ENCODE measurements at regions of chr17 and their contacts with region 1.

Region 1: GRCh38 chr17:44070455-44071197 is at the start of gene G6PC3:
- DNase-seq: peak; percentile 93
- ATAC-seq: peak; percentile 68
- H3K4me3 Mint-ChIP-seq: peak within 1 kb of the TSS; percentile 93
- H3K27ac Mint-ChIP-seq: peak within 1 kb of the TSS; percentile 98
- H3K4me1 Mint-ChIP-seq: peaks cover 30% of the 10 kb centered on the region
- H3K27me3 Mint-ChIP-seq: no peaks in the 10 kb centered on the region
- total RNA-seq, gene G6PC3: 21.3 to 22.0 TPM

Region 2: GRCh38 chr17:43615330-43616028 is 455.1 kb before region 1 on chr17:
- CTCF ChIA-PET with region 1: no interaction called
- POLR2A ChIA-PET with region 1: no interaction called
- intact Hi-C with region 1: no loop called
- DNase-seq: no peak
- ATAC-seq: no peak
- H3K4me3 Mint-ChIP-seq: no peak overlapping the region
- H3K27ac Mint-ChIP-seq: no peak overlapping the region
- H3K4me1 Mint-ChIP-seq: no peaks in the 10 kb centered on the region
- H3K27me3 Mint-ChIP-seq: no peaks in the 10 kb centered on the region

Region 3: GRCh38 chr17:44006598-44007345 is 63.9 kb before region 1 on chr17:
- CTCF ChIA-PET with region 1: no interaction called
- POLR2A ChIA-PET with region 1: no interaction called
- intact Hi-C with region 1: loop called in 1 of 2 experiments (anchors 1 kb)
- DNase-seq: peak; percentile 99
- ATAC-seq: peak; percentile 84
- H3K4me3 Mint-ChIP-seq: peak overlapping the region; percentile 78
- H3K27ac Mint-ChIP-seq: peak overlapping the region; percentile 86
- H3K4me1 Mint-ChIP-seq: peaks cover 20% of the 10 kb centered on the region
- H3K27me3 Mint-ChIP-seq: peaks cover 17% of the 10 kb centered on the region

Region 4: DNA sequence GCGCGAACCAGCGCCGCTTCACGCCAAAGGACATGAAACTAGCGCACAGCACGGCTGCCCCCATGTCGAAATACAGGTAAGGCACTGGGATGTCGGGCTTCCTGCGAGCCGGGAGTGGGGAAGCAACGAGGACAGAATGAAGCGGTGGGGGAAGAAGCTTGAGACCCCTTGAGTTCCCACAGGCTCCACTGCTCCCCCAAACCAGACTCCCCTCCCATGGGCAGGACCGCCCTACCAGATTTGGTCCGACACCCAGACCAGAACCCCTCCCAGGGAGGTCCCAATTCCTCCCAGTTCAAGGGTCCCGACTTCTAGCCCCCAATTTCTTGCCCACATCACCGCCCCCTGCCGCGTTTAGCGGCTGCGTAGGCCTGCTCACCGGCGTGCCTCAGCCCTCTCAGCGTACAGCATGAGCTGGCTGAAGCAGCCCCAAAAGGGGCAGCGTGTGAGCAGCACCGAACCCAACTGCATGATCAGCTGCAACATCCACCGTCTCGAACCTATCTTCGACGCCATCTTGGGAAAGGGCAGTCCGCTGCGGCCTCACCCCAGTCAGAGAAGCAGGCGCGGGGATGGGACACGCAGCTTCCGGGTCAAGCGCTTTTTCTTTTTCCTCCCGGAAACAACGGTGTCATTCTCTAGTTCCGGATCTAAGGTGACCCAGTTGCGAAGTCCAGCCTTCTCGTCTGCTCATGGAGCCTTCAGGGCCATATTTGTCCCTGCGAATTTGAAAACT is 56.0 kb before region 1 on chr17 and contains the start of gene TMEM101:
- CTCF ChIA-PET with region 1: no interaction called
- POLR2A ChIA-PET with region 1: interaction called, 3 read pairs
- intact Hi-C with region 1: loop called in 1 of 2 experiments (anchors 1 kb)
- DNase-seq: peak; percentile 94
- ATAC-seq: peak; percentile 99
- H3K4me3 Mint-ChIP-seq: peak within 1 kb of the TSS; percentile 96
- H3K27ac Mint-ChIP-seq: peak within 1 kb of the TSS; percentile 96
- H3K4me1 Mint-ChIP-seq: peaks cover 7% of the 10 kb centered on the region
- H3K27me3 Mint-ChIP-seq: no peaks in the 10 kb centered on the region
- total RNA-seq, gene TMEM101: 17.6 to 22.7 TPM

Region 5: DNA sequence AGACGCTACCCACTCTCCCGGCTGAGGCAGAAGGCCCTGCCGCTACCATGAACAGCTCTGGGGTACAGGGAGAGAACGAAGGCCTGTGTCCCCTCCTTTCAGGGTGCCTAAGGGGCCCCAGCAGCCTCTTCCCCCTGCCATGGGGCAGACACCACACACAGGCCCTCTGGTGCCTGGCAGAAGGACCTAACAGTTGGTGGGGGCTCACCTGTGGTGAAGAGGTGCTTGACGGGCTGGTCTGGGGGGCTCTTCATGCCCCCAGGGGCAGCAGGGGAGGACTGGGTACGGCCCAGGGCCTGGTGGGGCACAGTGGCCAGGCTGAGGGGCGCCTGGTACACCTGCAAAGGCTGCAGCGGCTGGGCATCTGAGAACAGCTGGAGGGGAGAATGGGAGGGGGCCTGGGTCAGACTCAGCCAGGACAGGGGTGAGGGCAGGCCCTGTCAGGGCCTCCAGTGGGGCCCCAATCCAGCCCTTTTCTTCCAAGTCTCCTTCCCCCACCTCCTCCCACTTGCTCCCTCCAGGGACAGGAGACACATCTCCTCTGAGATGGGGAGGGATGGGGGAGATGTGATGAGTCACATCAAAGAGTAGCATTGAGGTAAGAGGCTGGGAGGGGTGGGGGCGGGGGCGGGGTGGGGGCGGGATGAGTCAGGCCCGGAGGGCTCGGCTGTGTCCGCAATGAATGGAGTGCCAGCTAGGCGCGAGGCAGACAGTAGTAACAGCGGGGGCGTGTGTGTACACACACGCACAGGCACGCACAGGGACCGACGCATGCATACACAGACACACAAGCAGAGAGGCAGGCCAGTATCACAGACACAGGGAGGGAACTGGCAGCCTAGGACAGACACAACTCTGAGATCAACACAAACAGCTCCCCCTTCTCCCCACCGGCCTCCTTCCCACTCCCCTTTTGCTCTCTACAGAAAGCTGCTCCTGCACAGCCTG is 16.0 kb after region 1 on chr17:
- CTCF ChIA-PET with region 1: no interaction called
- POLR2A ChIA-PET with region 1: interaction called, 4 read pairs
- intact Hi-C with region 1: loop called in 1 of 2 experiments (anchors 2 kb)
- DNase-seq: peak; percentile 83
- ATAC-seq: peak; percentile 91
- H3K4me3 Mint-ChIP-seq: no peak overlapping the region
- H3K27ac Mint-ChIP-seq: peak overlapping the region; percentile 63
- H3K4me1 Mint-ChIP-seq: peaks cover 15% of the 10 kb centered on the region
- H3K27me3 Mint-ChIP-seq: no peaks in the 10 kb centered on the region

Region 6: GRCh38 chr17:44123356-44124117 is 52.9 kb after region 1 on chr17 and contains the start of gene HDAC5:
- CTCF ChIA-PET with region 1: interaction called, 5 read pairs
- POLR2A ChIA-PET with region 1: interaction called, 4 read pairs
- intact Hi-C with region 1: loop called (anchors 1 to 5 kb)
- DNase-seq: peak; percentile 98
- ATAC-seq: peak; percentile 97
- H3K4me3 Mint-ChIP-seq: peak within 1 kb of the TSS; percentile 87
- H3K27ac Mint-ChIP-seq: peak within 1 kb of the TSS; percentile 97
- H3K4me1 Mint-ChIP-seq: peaks cover 22% of the 10 kb centered on the region
- H3K27me3 Mint-ChIP-seq: no peaks in the 10 kb centered on the region
- total RNA-seq, gene HDAC5: 16.5 to 22.0 TPM

Region 7: DNA sequence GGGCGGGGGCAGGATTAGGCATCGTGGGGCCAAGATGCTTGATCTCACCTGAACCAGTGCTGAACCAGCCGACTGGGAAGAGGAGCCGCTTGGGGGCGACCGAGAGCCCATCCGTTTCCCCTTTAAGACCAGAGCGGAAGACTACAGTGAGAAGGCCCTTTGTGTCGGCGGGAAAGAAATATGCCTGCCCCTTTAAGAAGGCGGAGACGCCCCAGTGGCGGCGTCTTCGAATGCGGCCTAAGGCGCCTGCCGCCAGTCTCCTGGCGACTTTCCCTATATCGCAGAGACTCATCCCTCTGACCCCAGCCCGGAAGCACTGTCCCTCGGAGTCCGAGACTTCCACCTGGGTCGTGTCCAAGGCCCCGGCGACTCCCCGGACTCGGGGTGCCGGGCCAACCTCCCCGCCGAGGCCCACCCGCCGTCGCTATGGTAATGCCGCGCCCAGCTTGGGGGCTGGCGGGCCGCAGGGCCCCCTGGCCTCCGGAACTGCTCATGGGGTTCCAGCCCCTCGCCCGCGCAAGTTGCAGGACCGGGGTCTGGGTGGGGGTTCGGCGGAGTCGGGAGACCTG is 71.2 kb after region 1 on chr17 and contains the start of gene HROB:
- CTCF ChIA-PET with region 1: no interaction called
- POLR2A ChIA-PET with region 1: interaction called, 7 read pairs
- intact Hi-C with region 1: loop called (anchors 1 kb)
- DNase-seq: peak; percentile 99
- ATAC-seq: peak; percentile 83
- H3K4me3 Mint-ChIP-seq: peak within 1 kb of the TSS; percentile 91
- H3K27ac Mint-ChIP-seq: peak within 1 kb of the TSS; percentile 85
- H3K4me1 Mint-ChIP-seq: peaks cover 24% of the 10 kb centered on the region
- H3K27me3 Mint-ChIP-seq: peaks cover 2% of the 10 kb centered on the region
- total RNA-seq, gene HROB: 17.1 to 23.3 TPM

Region 8: DNA sequence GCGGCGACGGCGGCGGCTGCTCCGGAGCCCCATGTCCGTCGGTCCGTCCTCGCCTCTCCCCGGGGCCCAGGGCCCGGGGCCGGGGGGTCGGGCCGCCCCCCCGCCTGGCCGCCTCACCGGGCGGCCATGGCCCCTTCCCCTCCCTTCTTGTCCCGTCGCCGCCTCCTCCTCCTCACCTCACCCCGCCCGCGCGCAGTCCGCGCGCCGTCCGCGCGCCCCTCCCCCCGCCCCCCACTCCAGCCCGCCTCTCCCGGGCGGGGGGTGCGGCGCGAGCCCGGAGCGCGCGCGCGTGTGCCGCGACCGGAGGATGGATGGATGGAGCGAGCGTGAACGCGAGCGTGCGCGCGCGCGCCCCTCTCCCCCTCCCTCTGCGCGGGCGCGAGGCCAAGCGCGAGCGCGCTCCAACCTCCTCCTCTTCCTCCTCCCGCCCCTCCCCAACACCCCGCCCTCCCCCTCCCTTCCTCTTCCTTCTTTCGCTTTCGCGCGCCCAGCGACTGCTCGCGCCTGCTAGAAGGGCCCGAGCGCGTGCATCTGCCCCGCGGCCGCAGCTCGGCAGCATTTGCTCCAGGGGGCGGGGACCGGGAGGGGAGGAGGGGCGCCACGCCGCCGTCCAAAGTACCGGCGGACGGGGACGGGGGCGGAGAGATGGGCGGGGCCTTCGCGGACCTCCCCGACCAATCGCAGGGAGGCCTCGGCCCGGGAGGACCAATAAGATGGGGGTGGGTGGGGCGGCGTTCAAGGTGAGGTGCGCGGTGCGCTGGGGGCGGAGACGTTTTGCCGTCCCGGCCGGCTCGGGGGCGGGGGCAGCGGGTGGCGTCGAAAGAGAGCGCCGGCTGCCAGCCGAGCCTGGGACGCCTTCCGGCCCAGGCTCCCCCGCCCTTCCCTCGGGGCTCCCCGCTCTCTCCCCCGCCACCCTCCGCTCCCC is 129.2 kb after region 1 on chr17 and contains the start of gene ATXN7L3:
- CTCF ChIA-PET with region 1: no interaction called
- POLR2A ChIA-PET with region 1: no interaction called
- intact Hi-C with region 1: loop called in 1 of 2 experiments (anchors 1 kb)
- DNase-seq: peak; percentile 100
- ATAC-seq: peak; percentile 84
- H3K4me3 Mint-ChIP-seq: peak within 1 kb of the TSS; percentile 88
- H3K27ac Mint-ChIP-seq: peak within 1 kb of the TSS; percentile 94
- H3K4me1 Mint-ChIP-seq: peaks cover 38% of the 10 kb centered on the region
- H3K27me3 Mint-ChIP-seq: no peaks in the 10 kb centered on the region
- total RNA-seq, gene ATXN7L3: 66.3 to 70.6 TPM